Right cardiac atrium (tissue), 5 donors: ENCODE measurements at regions of chr1 and their contacts with region 1.

Region 1: GRCh38 chr1:175192630-175193526 is at the start of gene KIAA0040:
- DNase-seq: peak; percentile 84 to 92 (median 91)
- ATAC-seq: peak; percentile 90 to 94
- H3K4me3 ChIP-seq: peak within 1 kb of the TSS; percentile 74
- H3K27ac ChIP-seq: peak within 1 kb of the TSS; percentile 95
- H3K4me1 ChIP-seq: peaks cover 2% of the 10 kb centered on the region
- H3K27me3 ChIP-seq: no peaks in the 10 kb centered on the region
- total RNA-seq, gene KIAA0040: 17.6 to 36.0 (median 22.3) TPM

Region 2: DNA sequence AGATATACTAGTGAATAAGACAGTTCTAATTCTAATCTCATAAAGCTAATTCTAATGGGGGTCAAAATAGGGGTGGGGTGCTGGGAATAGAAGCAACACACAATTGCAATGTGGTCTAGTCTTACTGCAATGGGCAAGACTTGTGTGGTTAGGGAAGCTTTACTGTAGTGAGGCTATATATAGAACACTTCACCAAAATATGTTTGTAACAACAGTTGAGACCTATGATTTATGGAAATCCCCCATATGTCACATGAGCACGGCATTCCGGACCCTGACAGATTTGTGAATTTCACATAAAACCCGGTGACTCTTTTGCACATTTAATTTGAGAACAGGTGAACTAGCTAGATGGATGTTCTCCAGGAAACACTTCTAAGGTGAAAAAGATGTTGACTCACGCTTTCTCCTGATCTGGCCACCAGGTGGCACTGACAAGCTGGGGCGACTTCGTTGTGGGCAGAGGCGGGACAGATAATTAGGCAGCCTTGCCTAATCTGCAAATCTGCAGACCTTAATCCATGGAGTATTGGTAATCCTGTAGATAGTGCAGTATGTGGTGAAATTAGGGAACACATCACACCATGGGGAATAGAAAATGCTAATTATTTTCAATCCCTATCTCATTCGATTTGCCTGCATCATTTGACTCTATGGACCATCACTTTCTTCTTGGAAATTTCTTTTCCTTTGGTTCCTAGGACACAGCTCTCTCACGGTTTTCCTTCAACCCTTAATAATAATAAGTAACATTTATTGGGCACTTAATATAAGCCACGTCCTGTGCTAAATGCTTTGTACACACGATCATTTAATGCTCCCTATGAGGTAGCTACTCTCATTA is 38.0 kb before region 1 on chr1:
- intact Hi-C with region 1: loop called in 1 of 4 experiments (anchors 2 kb)
- DNase-seq: peak; percentile 67 to 88 (median 82)
- ATAC-seq: peak; percentile 46 to 65
- H3K4me3 ChIP-seq: no peak overlapping the region
- H3K27ac ChIP-seq: no peak overlapping the region
- H3K4me1 ChIP-seq: no peaks in the 10 kb centered on the region
- H3K27me3 ChIP-seq: no peaks in the 10 kb centered on the region